K562 (cell line): ENCODE measurements at regions of chr1 and their contacts with region 1.

Region 1: DNA sequence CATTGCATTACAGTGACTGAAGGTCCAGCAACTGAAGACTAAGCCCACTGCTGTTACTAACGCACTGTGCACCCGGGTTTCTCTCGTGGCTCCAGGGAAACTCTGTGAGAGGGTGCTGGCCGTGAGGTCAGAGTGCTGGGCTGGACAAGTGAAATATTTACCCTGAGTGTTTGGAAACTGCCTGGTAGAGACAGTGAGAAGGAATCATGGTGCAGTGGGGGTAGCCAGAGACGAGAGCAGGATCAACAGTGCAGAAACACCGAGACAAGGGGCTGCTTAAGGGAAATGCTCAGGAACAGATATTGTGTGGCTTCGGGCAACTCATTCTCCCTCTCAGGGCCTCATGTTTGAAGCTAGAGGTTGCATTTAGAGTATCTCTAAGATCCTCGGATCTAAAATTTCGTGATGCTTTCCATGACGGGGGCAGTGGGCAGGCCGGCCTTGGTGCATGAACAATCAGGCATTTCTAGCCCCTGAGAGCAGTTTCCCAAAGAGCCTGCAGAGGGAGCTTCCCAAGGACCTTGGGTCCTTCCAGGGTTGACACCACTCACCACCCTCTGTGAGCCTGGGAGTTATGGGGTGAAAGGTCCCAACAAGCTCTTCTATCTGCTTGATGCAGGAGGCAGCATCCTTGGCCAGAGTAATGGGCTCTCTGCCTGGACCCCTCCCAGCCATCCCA is 9.7 kb downstream of the CD2 start:
- DNase-seq: peak; percentile 70 to 84 (median 78)
- ATAC-seq: peak; percentile 96
- H3K4me3 ChIP-seq: no peak overlapping the region
- H3K27ac ChIP-seq: no peak overlapping the region
- H3K4me1 ChIP-seq: peaks cover 21 to 23% of the 10 kb centered on the region in 2 experiments
- H3K27me3 ChIP-seq: no peaks in the 10 kb centered on the region
- CTCF ChIP-seq: peak; percentile 77 to 90 (median 80)
- EP300 ChIP-seq: no peak
- POLR2A ChIP-seq: no peak
- RAD21 ChIP-seq: peak; percentile 44 to 78

Region 2: DNA sequence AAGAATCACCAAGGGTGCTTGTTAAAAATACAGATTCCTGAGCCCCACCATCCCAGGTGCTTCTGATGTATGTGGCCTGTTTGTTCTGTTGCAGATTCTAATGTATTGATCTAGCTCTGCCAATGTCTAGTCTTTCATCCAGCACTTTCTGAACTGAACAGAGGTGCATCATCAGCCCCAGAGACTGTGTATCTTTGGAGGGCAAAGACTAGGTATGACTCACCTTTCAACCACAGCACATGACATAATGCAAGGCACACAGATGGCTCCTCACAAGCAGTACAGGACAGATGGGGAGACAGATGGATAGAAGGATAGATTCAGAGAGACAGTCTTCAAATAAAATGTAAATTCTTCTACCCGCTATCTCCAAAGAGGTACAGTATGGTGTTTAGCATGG is 225.4 kb before region 1 on chr1:
- CTCF ChIA-PET with region 1: no interaction called
- POLR2A ChIA-PET with region 1: no interaction called
- in situ Hi-C with region 1: no loop called
- intact Hi-C with region 1: no loop called
- DNase-seq: peak in 2 of 4 experiments; percentile 42 to 45
- ATAC-seq: peak; percentile 68
- H3K4me3 ChIP-seq: no peak overlapping the region
- H3K27ac ChIP-seq: no peak overlapping the region
- H3K4me1 ChIP-seq: peaks cover 0 to 4% of the 10 kb centered on the region in 2 experiments; a peak in 1 of 5 replicates
- H3K27me3 ChIP-seq: no peaks in the 10 kb centered on the region
- CTCF ChIP-seq: no peak
- EP300 ChIP-seq: no peak
- POLR2A ChIP-seq: no peak
- RAD21 ChIP-seq: no peak

Region 3: GRCh38 chr1:116817582-116818064 is 53.7 kb after region 1 on chr1:
- CTCF ChIA-PET with region 1: no interaction called
- POLR2A ChIA-PET with region 1: no interaction called
- in situ Hi-C with region 1: no loop called
- intact Hi-C with region 1: loop called (anchors 1 kb)
- DNase-seq: peak; percentile 86 to 96 (median 92)
- ATAC-seq: peak; percentile 99
- H3K4me3 ChIP-seq: no peak overlapping the region
- H3K27ac ChIP-seq: no peak overlapping the region
- H3K4me1 ChIP-seq: no peaks in the 10 kb centered on the region; a peak in 1 of 5 replicates
- H3K27me3 ChIP-seq: no peaks in the 10 kb centered on the region
- CTCF ChIP-seq: peak; percentile 96 to 98 (median 98)
- EP300 ChIP-seq: 0 out of 2 replicates have a peak, but pooled peaks have one; percentile 10
- POLR2A ChIP-seq: no peak
- RAD21 ChIP-seq: peak; percentile 83 to 97

Region 4: GRCh38 chr1:116881879-116882520 is 118.1 kb after region 1 on chr1:
- CTCF ChIA-PET with region 1: no interaction called
- POLR2A ChIA-PET with region 1: no interaction called
- in situ Hi-C with region 1: no loop called
- intact Hi-C with region 1: loop called (anchors 5 kb)
- DNase-seq: peak; percentile 57 to 85 (median 70)
- ATAC-seq: peak; percentile 92
- H3K4me3 ChIP-seq: no peak overlapping the region
- H3K27ac ChIP-seq: peak overlapping the region; percentile 58
- H3K4me1 ChIP-seq: peaks cover 23 to 36% of the 10 kb centered on the region in 2 experiments
- H3K27me3 ChIP-seq: no peaks in the 10 kb centered on the region
- CTCF ChIP-seq: peak; percentile 86 to 88 (median 88)
- EP300 ChIP-seq: peak; percentile 51
- POLR2A ChIP-seq: no peak
- RAD21 ChIP-seq: peak; percentile 88 to 93